Mammary epithelial cell (primary cell): ENCODE measurements at regions of chr18 and their contacts with region 1.

Region 1: DNA sequence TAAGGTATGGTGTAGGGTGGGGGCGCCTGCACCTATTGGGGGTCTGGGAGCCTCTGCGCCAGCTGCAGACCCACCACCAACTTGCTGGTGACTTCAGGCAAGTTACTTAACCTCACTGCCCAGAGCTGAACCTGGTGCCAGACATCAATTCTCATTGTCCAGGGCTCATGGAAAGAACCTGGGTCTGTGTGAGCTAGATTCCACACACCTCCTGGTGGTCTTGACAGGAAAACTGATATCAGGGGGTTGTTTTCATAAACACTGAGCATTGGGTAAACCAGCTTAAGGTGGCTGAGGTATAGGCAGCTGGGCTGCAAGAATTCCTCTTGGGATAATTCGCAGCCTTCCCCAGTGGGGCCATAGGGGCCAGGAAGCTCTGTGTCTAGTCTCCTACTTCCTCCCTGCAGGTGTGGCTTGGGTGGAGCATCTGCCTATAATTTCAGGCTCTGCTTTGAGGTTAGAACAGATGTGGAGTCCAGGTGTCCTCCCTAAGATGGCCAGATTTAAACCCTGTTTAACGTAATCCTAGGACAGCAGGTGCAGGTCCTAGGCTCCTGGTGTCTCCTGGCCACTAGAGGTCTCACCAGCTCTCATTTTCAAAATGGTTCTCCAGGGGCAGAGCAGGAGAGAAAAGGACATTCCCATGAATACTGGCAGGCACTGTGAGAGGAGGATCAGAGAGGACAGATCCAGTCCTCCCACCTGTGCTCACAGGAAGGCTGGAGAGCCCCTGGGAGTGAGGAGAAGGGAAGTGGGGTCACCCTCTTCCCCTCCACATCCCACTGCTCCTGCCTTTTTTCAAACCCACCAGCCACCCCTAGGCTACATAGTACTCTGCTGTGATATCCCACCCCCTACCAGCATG is 100.4 kb upstream of the SMAD2 start:
- DNase-seq: peak; percentile 62
- H3K4me3 ChIP-seq: no peak overlapping the region
- H3K27ac ChIP-seq: no peak overlapping the region
- H3K4me1 ChIP-seq: peaks cover 32% of the 10 kb centered on the region
- H3K27me3 ChIP-seq: no peaks in the 10 kb centered on the region
- CTCF ChIP-seq: peak; percentile 89 to 91

Region 2: GRCh38 chr18:48095726-48096125 is 64.9 kb after region 1 on chr18:
- CTCF ChIA-PET with region 1: no interaction called
- dilution Hi-C with region 1: no loop called
- in situ Hi-C with region 1: no loop called
- intact Hi-C with region 1: no loop called
- DNase-seq: no peak
- H3K4me3 ChIP-seq: no peak overlapping the region
- H3K27ac ChIP-seq: no peak overlapping the region
- H3K4me1 ChIP-seq: peaks cover 17% of the 10 kb centered on the region
- H3K27me3 ChIP-seq: no peaks in the 10 kb centered on the region
- CTCF ChIP-seq: no peak

Region 3: DNA sequence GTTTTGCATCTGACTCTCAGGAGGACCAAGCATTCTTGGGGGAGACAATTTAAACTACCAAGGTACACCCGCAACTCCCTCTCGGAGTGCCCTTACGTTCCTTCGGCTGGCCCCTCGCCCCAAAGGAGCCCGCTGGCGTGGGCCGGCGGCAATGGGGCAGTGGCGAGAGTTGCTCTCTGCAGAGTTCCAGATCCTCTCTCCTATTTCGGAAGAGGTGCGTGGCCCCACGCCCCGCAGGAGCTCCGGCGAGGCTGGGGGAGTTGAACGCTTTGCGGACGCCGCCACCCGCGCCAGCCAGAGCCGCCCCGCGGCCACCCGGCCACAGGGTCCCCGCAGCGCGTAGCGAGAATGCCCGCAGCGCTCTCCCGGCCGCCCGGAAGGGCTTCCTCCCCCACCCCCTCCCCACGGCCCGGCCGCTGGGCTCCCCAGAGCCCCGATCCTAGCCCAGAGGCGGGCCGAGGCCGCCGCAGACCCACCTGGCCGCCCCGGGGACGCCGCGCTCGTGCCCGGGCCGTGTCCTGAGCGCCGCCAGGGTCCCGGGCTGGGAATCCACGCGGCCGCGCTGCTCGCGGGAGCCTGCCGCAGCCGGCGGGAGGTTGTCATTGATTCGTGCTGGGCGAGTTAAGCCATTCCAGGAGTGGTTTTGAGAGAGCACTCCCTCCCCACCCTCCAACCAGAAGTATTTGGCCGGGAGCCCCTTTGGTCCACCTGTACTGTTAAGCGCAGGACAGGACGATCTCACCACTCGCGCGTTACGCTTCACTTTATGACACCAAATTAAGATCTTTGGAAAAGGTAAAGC is 105.9 kb after region 1 on chr18:
- CTCF ChIA-PET with region 1: no interaction called
- dilution Hi-C with region 1: no loop called
- in situ Hi-C with region 1: loop called in 1 of 2 experiments (anchors 25 kb)
- intact Hi-C with region 1: no loop called
- DNase-seq: no peak
- H3K4me3 ChIP-seq: peak overlapping the region; percentile 50 to 53 (median 51)
- H3K27ac ChIP-seq: no peak overlapping the region
- H3K4me1 ChIP-seq: peaks cover 36% of the 10 kb centered on the region
- H3K27me3 ChIP-seq: no peaks in the 10 kb centered on the region
- CTCF ChIP-seq: no peak

Region 4: GRCh38 chr18:48222118-48222517 is 191.3 kb after region 1 on chr18:
- CTCF ChIA-PET with region 1: no interaction called
- dilution Hi-C with region 1: no loop called
- in situ Hi-C with region 1: loop called in 1 of 2 experiments (anchors 10 kb)
- intact Hi-C with region 1: loop called (anchors 1 kb)
- DNase-seq: peak; percentile 95
- H3K4me3 ChIP-seq: no peak overlapping the region
- H3K27ac ChIP-seq: no peak overlapping the region
- H3K4me1 ChIP-seq: peaks cover 22% of the 10 kb centered on the region
- H3K27me3 ChIP-seq: no peaks in the 10 kb centered on the region
- CTCF ChIP-seq: no peak

Region 5: DNA sequence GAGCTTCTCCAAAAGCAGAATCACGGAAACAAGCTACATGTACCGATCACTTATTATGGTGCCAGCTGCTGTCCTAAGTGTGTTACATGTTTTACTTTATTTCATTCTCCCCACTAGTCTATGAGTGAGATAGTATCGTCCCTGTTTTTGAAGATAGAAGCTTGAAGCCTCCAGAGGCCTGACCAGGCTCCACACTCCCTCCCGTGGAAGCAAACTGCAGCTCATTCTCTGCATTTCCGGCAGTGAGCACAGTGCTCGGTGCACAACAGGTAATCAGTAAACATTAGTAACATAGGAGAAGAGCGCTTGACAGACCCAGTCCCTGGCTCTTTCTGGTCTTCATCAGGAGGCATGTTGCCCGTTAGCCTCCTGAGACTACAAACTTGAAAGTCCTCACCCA is 305.5 kb after region 1 on chr18:
- CTCF ChIA-PET with region 1: no interaction called
- dilution Hi-C with region 1: no loop called
- in situ Hi-C with region 1: loop called (anchors 5 to 10 kb)
- intact Hi-C with region 1: loop called (anchors 1 kb)
- DNase-seq: no peak
- H3K4me3 ChIP-seq: no peak overlapping the region
- H3K27ac ChIP-seq: no peak overlapping the region
- H3K4me1 ChIP-seq: peaks cover 7% of the 10 kb centered on the region
- H3K27me3 ChIP-seq: no peaks in the 10 kb centered on the region
- CTCF ChIP-seq: peak; percentile 53 to 83

Region 6: DNA sequence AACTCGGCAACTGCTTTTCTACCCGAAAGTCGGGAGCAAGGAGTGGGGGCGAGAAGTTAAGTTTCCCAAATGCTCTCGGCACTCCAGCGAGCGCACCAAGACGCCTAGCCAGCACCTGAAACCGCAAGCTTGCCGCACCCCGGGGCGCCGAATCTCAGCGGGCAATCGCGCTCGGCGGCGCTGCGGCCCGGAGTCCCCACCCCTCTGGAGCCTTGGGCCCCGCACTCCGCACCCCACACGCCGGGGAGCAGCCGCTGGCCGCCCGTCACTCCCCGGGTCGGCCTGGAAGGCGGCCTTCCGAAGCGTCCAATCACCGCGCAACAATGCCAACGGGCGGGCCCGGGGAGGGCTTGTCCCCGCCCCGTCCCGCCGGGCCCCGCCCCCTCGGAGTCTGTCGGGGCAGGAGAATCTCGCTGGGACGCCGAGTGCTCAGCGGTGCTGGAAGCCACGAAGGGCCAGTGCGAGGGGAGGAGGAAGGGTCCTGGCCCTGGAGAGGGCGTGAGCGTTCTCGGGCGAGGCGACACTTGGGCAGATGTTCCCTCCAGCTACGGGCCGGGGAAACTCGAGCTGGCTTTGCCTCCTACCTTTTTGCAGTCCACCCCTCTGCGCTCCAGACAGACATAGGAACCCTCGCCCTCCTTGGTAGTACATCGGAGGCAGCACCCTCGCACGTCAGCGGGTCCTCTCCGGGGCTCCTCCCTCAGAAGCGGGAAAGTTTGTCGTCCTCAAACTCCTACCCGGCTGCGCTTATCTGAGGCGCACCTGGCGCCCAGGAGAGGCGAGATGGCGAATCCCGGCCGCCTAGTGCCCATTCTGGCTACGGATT is 379.5 kb after region 1 on chr18:
- CTCF ChIA-PET with region 1: no interaction called
- dilution Hi-C with region 1: no loop called
- in situ Hi-C with region 1: no loop called
- intact Hi-C with region 1: loop called (anchors 2 kb)
- DNase-seq: peak; percentile 93
- H3K4me3 ChIP-seq: peak overlapping the region; percentile 75 to 84 (median 82)
- H3K27ac ChIP-seq: peak overlapping the region; percentile 52
- H3K4me1 ChIP-seq: peaks cover 31% of the 10 kb centered on the region
- H3K27me3 ChIP-seq: no peaks in the 10 kb centered on the region
- CTCF ChIP-seq: peak; percentile 20 to 24